RWPE1 (cell line): ENCODE measurements at regions of chr6 and their contacts with region 1.

Region 1: DNA sequence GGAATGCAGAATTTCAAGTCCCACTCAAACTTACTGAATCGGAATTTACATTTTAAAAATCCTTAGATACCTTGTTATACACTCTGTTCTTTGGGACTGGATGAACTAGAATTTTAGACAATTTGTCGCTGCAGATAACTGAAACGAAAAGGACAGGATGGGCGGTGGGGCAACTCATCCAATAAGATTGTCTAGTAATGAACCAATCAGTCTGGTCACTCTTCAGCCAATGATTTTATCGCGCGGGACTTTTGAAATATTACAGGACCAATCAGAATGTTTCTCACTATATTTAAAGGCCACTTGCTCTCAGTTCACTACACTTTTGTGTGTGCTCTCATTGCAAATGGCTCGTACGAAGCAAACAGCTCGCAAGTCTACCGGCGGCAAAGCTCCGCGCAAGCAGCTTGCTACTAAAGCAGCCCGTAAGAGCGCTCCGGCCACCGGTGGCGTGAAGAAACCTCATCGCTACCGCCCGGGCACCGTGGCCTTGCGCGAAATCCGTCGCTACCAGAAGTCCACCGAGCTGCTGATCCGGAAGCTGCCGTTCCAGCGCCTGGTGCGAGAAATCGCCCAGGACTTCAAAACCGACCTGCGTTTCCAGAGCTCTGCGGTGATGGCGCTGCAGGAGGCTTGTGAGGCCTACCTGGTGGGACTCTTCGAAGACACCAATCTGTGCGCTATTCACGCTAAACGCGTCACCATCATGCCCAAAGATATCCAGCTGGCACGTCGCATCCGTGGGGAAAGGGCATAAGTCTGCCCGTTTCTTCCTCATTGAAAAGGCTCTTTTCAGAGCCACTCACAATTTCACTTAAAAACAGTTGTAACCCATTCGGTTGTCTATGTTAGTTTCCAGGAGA is 41.9 kb upstream of the HFE start:
- DNase-seq: peak; percentile 93
- H3K27ac ChIP-seq: peak overlapping the region; percentile 97
- CTCF ChIP-seq: no peak

Region 2: DNA sequence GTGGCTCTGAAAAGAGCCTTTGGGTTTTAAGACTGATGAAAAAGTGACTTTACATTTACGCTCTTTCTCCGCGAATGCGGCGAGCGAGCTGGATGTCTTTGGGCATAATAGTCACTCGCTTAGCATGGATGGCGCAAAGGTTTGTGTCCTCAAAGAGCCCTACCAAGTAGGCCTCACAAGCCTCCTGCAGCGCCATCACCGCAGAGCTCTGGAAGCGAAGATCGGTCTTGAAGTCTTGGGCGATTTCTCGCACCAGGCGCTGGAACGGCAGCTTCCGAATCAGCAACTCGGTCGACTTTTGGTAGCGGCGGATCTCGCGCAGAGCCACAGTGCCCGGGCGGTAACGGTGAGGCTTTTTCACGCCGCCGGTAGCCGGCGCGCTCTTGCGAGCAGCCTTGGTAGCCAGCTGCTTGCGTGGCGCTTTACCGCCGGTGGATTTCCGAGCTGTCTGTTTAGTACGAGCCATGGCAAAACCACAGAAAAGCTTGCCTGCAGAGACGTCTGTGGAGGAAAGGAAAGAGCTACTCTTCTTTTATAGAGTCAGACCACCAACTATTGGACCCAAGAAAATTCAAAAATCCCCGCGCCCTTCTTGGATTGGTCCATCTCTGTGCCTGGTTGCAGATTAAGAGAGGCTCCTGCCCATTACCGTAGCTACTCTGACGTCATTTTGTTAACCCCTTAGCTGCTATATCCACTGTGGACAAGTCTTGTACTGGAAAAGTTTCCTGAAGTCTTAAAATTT is 13.5 kb before region 1 on chr6:
- CTCF ChIA-PET with region 1: interaction called, 3 read pairs
- POLR2A ChIA-PET with region 1: interaction called, 33 read pairs
- DNase-seq: peak; percentile 96
- H3K27ac ChIP-seq: peak overlapping the region; percentile 99
- CTCF ChIP-seq: no peak